CD4-positive, alpha-beta memory T cell (primary cell): ENCODE measurements at regions of chr7 and their contacts with region 1.

Region 1: GRCh38 chr7:17009007-17009719 is 127.4 kb upstream of the AGR3 start:
- DNase-seq: peak in 4 of 5 donors; percentile 28 to 53 (median 38)
- H3K4me3 ChIP-seq: no peak overlapping the region
- H3K4me3 Mint-ChIP-seq: peak overlapping the region in 1 of 8 donors; percentile 19
- H3K27ac ChIP-seq: no peak overlapping the region
- H3K27ac Mint-ChIP-seq: peak overlapping the region in 5 of 7 donors; percentile 8 to 57 (median 26)
- H3K4me1 ChIP-seq: peaks cover 20% of the 10 kb centered on the region
- H3K4me1 Mint-ChIP-seq: peaks cover 14 to 29% (median 16%) of the 10 kb centered on the region in 4 donors
- H3K27me3 ChIP-seq: no peaks in the 10 kb centered on the region
- H3K27me3 Mint-ChIP-seq: peaks cover 0 to 2% of the 10 kb centered on the region in 2 donors

Region 2: DNA sequence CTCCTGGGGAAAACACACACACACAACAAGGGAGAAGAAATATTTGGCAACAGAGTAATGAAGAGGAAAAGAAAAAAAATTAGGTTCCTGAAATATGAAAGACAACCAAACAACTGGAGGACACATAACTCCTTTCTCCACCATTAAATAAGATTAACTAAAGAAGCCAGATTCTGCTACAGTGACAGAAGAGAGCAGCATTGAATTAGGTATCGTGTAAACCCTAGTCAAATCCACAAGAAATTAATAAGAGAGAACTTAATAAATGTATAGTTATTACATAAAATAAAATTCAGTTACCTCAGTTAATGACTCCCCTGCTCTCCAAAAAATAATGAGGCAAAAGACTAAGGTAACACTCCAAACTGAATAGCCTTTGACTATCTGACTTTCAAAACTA is 894.5 kb before region 1 on chr7:
- CTCF ChIA-PET with region 1: no interaction called
- POLR2A ChIA-PET with region 1: no interaction called
- intact Hi-C with region 1: no loop called
- DNase-seq: no peak
- H3K4me3 ChIP-seq: no peak overlapping the region
- H3K4me3 Mint-ChIP-seq: no peak overlapping the region
- H3K27ac ChIP-seq: no peak overlapping the region
- H3K27ac Mint-ChIP-seq: no peak overlapping the region
- H3K4me1 ChIP-seq: no peaks in the 10 kb centered on the region
- H3K4me1 Mint-ChIP-seq: peaks cover 0 to 8% (median 5%) of the 10 kb centered on the region in 4 donors
- H3K27me3 ChIP-seq: no peaks in the 10 kb centered on the region
- H3K27me3 Mint-ChIP-seq: no peaks in the 10 kb centered on the region

Region 3: DNA sequence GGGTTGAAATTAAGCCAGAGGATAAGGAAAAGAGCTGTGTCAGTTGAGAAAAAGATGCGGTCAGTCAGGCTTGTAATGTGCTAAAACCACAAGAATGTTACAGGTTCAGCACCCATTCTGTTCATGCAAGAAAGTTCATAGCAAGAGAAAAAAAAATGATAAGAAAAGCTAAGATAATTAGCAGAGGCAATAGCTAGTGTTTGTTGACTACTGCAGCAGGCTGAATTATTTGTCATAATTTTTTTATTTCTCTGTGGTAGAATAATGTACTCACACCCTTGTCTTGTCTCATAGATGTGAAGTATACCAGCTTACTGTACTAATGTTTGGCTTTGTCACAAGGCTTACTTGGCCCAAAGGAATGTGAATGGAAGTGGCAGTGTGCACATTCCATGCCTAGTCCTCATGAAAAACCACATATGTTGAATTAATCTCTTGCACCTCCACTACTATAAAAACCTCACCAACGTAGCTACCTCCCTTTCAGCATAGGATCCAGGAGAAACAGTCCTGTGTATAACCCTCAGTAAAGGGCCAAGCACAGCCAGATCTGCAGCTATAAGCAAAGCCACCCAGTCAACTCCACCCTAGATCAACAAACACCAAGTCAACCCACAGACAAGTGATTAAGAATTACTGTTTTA is 662.7 kb before region 1 on chr7:
- CTCF ChIA-PET with region 1: no interaction called
- POLR2A ChIA-PET with region 1: no interaction called
- intact Hi-C with region 1: no loop called
- DNase-seq: peak in 1 of 5 donors; percentile 3
- H3K4me3 ChIP-seq: no peak overlapping the region
- H3K4me3 Mint-ChIP-seq: no peak overlapping the region
- H3K27ac ChIP-seq: no peak overlapping the region
- H3K27ac Mint-ChIP-seq: peak overlapping the region in 1 of 7 donors; percentile 7
- H3K4me1 ChIP-seq: no peaks in the 10 kb centered on the region
- H3K4me1 Mint-ChIP-seq: no peaks in the 10 kb centered on the region
- H3K27me3 ChIP-seq: no peaks in the 10 kb centered on the region
- H3K27me3 Mint-ChIP-seq: no peaks in the 10 kb centered on the region

Region 4: DNA sequence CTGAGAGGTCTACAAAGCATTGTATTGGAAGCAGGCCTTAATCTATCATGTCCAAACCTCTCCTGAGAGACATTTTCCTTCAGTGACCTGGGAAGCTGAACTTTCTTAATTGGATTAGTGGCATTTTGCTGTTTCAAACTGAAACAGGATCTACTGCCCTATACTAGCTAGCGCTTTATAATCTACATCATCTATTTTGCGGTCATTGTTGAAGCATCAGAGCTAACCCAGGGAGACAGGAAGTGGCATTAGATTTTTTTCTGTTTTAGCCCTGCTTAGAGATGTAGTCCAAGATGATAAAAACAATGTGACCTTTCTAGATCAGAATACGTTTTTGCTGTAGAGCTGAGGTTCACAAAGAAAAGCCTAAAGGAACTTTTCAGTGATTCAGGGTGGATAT is 20.0 kb after region 1 on chr7:
- CTCF ChIA-PET with region 1: interaction called, 7 read pairs
- POLR2A ChIA-PET with region 1: interaction called, 4 read pairs
- intact Hi-C with region 1: loop called (anchors 2 kb)
- DNase-seq: peak; percentile 38 to 68 (median 48)
- H3K4me3 ChIP-seq: no peak overlapping the region
- H3K4me3 Mint-ChIP-seq: peak overlapping the region in 3 of 8 donors; percentile 0 to 17 (median 7)
- H3K27ac ChIP-seq: no peak overlapping the region
- H3K27ac Mint-ChIP-seq: peak overlapping the region in 3 of 7 donors; percentile 8 to 89 (median 36)
- H3K4me1 ChIP-seq: peaks cover 20% of the 10 kb centered on the region
- H3K4me1 Mint-ChIP-seq: peaks cover 7 to 52% (median 12%) of the 10 kb centered on the region in 4 donors
- H3K27me3 ChIP-seq: no peaks in the 10 kb centered on the region
- H3K27me3 Mint-ChIP-seq: no peaks in the 10 kb centered on the region

Region 5: GRCh38 chr7:17144322-17144721 is 135.2 kb after region 1 on chr7:
- CTCF ChIA-PET with region 1: interaction called, 3 read pairs
- POLR2A ChIA-PET with region 1: no interaction called
- intact Hi-C with region 1: loop called (anchors 10 kb)
- DNase-seq: peak; percentile 32 to 85 (median 36)
- H3K4me3 ChIP-seq: peak overlapping the region in 1 of 2 donors; percentile 27
- H3K4me3 Mint-ChIP-seq: peak overlapping the region in 7 of 8 donors; percentile 59 to 83 (median 78)
- H3K27ac ChIP-seq: no peak overlapping the region
- H3K27ac Mint-ChIP-seq: peak overlapping the region; percentile 36 to 90 (median 82)
- H3K4me1 ChIP-seq: peaks cover 58% of the 10 kb centered on the region
- H3K4me1 Mint-ChIP-seq: peaks cover 37 to 51% (median 40%) of the 10 kb centered on the region in 4 donors
- H3K27me3 ChIP-seq: no peaks in the 10 kb centered on the region
- H3K27me3 Mint-ChIP-seq: no peaks in the 10 kb centered on the region

Region 6: GRCh38 chr7:17304926-17305325 is 295.8 kb after region 1 on chr7:
- CTCF ChIA-PET with region 1: interaction called, 23 read pairs
- POLR2A ChIA-PET with region 1: interaction called, 17 read pairs
- intact Hi-C with region 1: loop called (anchors 1 kb)
- DNase-seq: peak; percentile 24 to 68 (median 44)
- H3K4me3 ChIP-seq: peak overlapping the region in 1 of 2 donors; percentile 17
- H3K4me3 Mint-ChIP-seq: peak overlapping the region; percentile 21 to 79 (median 66)
- H3K27ac ChIP-seq: peak overlapping the region; percentile 37
- H3K27ac Mint-ChIP-seq: peak overlapping the region; percentile 5 to 89 (median 77)
- H3K4me1 ChIP-seq: peaks cover 91% of the 10 kb centered on the region
- H3K4me1 Mint-ChIP-seq: peaks cover 9 to 36% (median 21%) of the 10 kb centered on the region in 4 donors
- H3K27me3 ChIP-seq: no peaks in the 10 kb centered on the region
- H3K27me3 Mint-ChIP-seq: no peaks in the 10 kb centered on the region

Region 7: DNA sequence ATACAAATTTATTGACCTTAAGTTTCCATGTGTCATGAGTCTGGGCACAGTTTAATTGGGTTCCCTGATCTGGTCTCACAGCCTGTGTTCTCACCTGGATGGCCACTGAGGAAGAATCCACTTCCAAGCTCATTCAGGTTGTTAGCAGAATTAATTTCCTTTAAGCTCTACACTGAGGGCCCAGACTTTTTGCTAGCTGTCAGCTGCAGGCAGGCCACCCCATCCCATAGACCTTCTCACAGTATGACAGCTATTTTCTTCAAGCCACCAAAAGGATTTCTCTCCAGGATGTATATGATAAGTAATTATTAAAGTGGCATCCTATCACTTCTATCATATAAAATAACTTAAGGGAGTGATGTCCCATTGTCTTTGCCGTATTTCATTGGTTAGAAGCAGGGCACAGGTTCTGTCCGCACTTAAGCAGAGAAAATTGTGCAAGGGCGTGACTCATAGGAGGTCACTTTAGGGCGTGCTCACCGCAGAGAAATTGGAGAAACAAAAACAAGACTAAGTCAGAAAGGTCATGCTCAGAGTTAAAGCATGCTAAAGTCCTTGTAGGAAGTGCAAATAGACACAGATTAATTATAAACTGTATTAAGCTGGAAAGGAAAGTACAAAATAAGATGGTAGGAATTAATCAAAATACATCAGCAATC is 399.2 kb after region 1 on chr7:
- CTCF ChIA-PET with region 1: no interaction called
- POLR2A ChIA-PET with region 1: no interaction called
- intact Hi-C with region 1: loop called (anchors 10 kb)
- DNase-seq: no peak
- H3K4me3 ChIP-seq: no peak overlapping the region
- H3K4me3 Mint-ChIP-seq: no peak overlapping the region
- H3K27ac ChIP-seq: no peak overlapping the region
- H3K27ac Mint-ChIP-seq: no peak overlapping the region
- H3K4me1 ChIP-seq: no peaks in the 10 kb centered on the region
- H3K4me1 Mint-ChIP-seq: no peaks in the 10 kb centered on the region
- H3K27me3 ChIP-seq: no peaks in the 10 kb centered on the region
- H3K27me3 Mint-ChIP-seq: peaks cover 0 to 2% of the 10 kb centered on the region in 2 donors